MCF 10A (cell line): ENCODE measurements at regions of chr1 and their contacts with region 1.

Region 1: GRCh38 chr1:63773815-63774616 is at the start of gene ROR1:
- DNase-seq: peak; percentile 85
- H3K4me3 Mint-ChIP-seq: peak within 1 kb of the TSS; percentile 93
- H3K27ac Mint-ChIP-seq: peak within 1 kb of the TSS; percentile 29
- H3K4me1 Mint-ChIP-seq: peaks cover 16% of the 10 kb centered on the region
- H3K27me3 Mint-ChIP-seq: no peaks in the 10 kb centered on the region
- CTCF ChIP-seq: peak; percentile 57
- total RNA-seq, gene ROR1: 4.6 and 10.3 TPM in 2 replicates

Region 2: GRCh38 chr1:63615768-63616420 is 158.1 kb before region 1 on chr1:
- CTCF ChIA-PET with region 1: no interaction called
- POLR2A ChIA-PET with region 1: no interaction called
- intact Hi-C with region 1: loop called (anchors 1 kb)
- DNase-seq: peak; percentile 82
- H3K4me3 Mint-ChIP-seq: no peak overlapping the region
- H3K27ac Mint-ChIP-seq: no peak overlapping the region
- H3K4me1 Mint-ChIP-seq: peaks cover 24% of the 10 kb centered on the region
- H3K27me3 Mint-ChIP-seq: no peaks in the 10 kb centered on the region
- CTCF ChIP-seq: peak; percentile 72

Region 3: DNA sequence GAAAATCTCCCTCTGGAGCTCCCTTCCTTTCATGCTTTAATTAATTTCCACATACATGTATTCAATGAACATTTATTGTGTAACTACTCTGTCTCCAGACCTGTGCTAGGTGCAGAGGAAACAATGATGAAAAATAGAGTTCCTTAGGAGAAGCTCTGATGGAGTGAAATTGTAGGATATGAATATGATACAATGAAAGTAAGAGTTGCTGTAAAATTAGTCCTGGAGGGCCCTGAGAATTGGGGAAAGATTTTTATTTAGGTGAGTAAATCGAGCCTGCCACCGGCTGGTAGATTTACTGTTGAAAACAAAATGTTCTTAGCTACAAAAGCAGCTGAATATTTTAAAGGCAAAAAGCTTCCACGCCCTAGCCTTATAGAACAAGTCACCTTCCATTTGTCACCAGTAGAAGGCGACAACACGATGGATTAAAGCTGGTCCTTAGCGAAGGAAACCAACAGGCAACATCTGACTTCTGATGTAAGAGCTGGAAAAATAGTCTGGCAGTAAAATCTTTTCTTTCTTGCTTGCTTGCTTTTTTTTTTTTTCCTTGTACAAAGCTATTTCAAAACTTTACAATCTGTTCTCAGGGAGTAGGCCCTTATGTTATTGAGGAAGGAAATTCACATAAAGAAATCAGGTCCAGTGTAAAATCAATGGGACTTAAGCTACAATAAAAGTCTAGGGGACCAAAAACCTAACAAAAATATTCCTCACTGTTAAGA is 82.2 kb before region 1 on chr1:
- CTCF ChIA-PET with region 1: interaction called, 22 read pairs
- POLR2A ChIA-PET with region 1: interaction called, 13 read pairs
- intact Hi-C with region 1: loop called (anchors 1 kb)
- DNase-seq: peak; percentile 88
- H3K4me3 Mint-ChIP-seq: no peak overlapping the region
- H3K27ac Mint-ChIP-seq: peak overlapping the region; percentile 28
- H3K4me1 Mint-ChIP-seq: peaks cover 17% of the 10 kb centered on the region
- H3K27me3 Mint-ChIP-seq: no peaks in the 10 kb centered on the region
- CTCF ChIP-seq: peak; percentile 63

Region 4: DNA sequence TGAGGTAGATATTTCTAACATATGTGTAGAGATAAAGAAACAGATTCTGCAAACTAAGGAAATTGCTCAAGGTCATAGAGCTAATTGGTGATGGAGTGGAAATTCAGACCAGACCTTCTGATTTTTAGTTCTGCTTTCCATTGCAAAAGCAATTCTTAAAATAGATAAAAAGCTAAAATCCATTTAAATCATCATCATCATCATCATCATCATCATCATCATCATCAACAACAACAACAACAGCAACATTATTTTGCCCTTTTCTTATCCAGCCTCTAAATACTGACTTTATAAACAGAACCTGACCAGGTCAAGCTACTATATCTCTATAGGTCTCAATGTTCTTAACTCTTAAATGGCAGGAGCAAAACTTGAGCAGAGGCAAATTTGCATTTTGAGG is 14.2 kb before region 1 on chr1:
- CTCF ChIA-PET with region 1: interaction called, 10 read pairs
- POLR2A ChIA-PET with region 1: interaction called, 4 read pairs
- intact Hi-C with region 1: no loop called
- DNase-seq: no peak
- H3K4me3 Mint-ChIP-seq: no peak overlapping the region
- H3K27ac Mint-ChIP-seq: no peak overlapping the region
- H3K4me1 Mint-ChIP-seq: no peaks in the 10 kb centered on the region
- H3K27me3 Mint-ChIP-seq: no peaks in the 10 kb centered on the region
- CTCF ChIP-seq: no peak

Region 5: GRCh38 chr1:63835075-63835633 is 61.1 kb after region 1 on chr1:
- CTCF ChIA-PET with region 1: no interaction called
- POLR2A ChIA-PET with region 1: no interaction called
- intact Hi-C with region 1: no loop called
- DNase-seq: peak; percentile 43
- H3K4me3 Mint-ChIP-seq: no peak overlapping the region
- H3K27ac Mint-ChIP-seq: no peak overlapping the region
- H3K4me1 Mint-ChIP-seq: peaks cover 15% of the 10 kb centered on the region
- H3K27me3 Mint-ChIP-seq: no peaks in the 10 kb centered on the region
- CTCF ChIP-seq: no peak

Region 6: GRCh38 chr1:63935143-63935542 is 161.1 kb after region 1 on chr1:
- CTCF ChIA-PET with region 1: no interaction called
- POLR2A ChIA-PET with region 1: interaction called, 4 read pairs
- intact Hi-C with region 1: loop called (anchors 5 kb)
- DNase-seq: peak; percentile 53
- H3K4me3 Mint-ChIP-seq: no peak overlapping the region
- H3K27ac Mint-ChIP-seq: no peak overlapping the region
- H3K4me1 Mint-ChIP-seq: peaks cover 6% of the 10 kb centered on the region
- H3K27me3 Mint-ChIP-seq: no peaks in the 10 kb centered on the region
- CTCF ChIP-seq: peak; percentile 36

Region 7: GRCh38 chr1:64163970-64164369 is 390.0 kb after region 1 on chr1:
- CTCF ChIA-PET with region 1: interaction called, 7 read pairs
- POLR2A ChIA-PET with region 1: interaction called, 3 read pairs
- intact Hi-C with region 1: loop called (anchors 1 kb)
- DNase-seq: peak; percentile 30
- H3K4me3 Mint-ChIP-seq: no peak overlapping the region
- H3K27ac Mint-ChIP-seq: no peak overlapping the region
- H3K4me1 Mint-ChIP-seq: no peaks in the 10 kb centered on the region
- H3K27me3 Mint-ChIP-seq: no peaks in the 10 kb centered on the region
- CTCF ChIP-seq: peak; percentile 28